Activated CD4-positive, alpha-beta T cell treated with anti-CD3 and anti-CD28 coated beads for 36 hours (primary cell): ENCODE measurements at regions of chr5 and their contacts with region 1.

Region 1: DNA sequence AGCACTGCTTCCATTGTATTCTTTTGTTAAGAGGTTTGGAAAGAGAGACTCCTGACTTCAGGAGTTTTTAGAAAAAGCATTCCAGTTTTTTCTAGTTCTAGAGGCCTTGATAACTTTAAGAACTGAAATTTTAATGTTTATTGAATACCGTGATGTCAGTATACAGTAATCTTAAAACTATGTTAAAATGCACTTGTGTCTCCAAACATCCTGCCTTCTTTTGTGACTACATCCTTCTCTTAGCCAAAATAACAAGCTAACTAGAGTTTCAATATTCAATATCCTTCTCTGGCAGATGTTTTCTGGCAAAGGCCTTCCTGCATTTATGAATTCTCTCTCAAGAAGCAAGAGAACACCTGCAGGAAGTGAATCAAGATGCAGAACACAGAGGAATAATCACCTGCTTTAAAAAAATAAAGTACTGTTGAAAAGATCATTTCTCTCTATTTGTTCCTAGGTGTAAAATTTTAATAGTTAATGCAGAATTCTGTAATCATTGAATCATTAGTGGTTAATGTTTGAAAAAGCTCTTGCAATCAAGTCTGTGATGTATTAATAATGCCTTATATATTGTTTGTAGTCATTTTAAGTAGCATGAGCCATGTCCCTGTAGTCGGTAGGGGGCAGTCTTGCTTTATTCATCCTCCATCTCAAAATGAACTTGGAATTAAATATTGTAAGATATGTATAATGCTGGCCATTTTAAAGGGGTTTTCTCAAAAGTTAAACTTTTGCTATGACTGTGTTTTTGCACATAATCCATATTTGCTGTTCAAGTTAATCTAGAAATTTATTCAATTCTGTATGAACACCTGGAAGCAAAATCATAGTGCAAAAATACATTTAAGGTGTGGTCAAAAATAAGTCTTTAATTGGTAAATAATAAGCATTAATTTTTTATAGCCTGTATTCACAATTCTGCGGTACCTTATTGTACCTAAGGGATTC is 43.1 kb downstream of the NDFIP1 start:
- DNase-seq: peak; percentile 68
- ATAC-seq: peak; percentile 77
- H3K4me3 Mint-ChIP-seq: no peak overlapping the region
- H3K27ac Mint-ChIP-seq: no peak overlapping the region
- H3K4me1 Mint-ChIP-seq: peaks cover 16% of the 10 kb centered on the region
- H3K27me3 Mint-ChIP-seq: no peaks in the 10 kb centered on the region

Region 2: GRCh38 chr5:142446131-142446959 is 294.6 kb after region 1 on chr5:
- CTCF ChIA-PET with region 1: no interaction called
- POLR2A ChIA-PET with region 1: no interaction called
- intact Hi-C with region 1: loop called (anchors 5 to 10 kb)
- DNase-seq: no peak
- ATAC-seq: no peak
- H3K4me3 Mint-ChIP-seq: no peak overlapping the region
- H3K27ac Mint-ChIP-seq: no peak overlapping the region
- H3K4me1 Mint-ChIP-seq: peaks cover 16% of the 10 kb centered on the region
- H3K27me3 Mint-ChIP-seq: no peaks in the 10 kb centered on the region